Calu3 (cell line): ENCODE measurements at regions of chr2 and their contacts with region 1.

Region 1: GRCh38 chr2:223697892-223698645 is 95.9 kb upstream of the SCG2 start:
- DNase-seq: peak; percentile 50
- H3K4me3 Mint-ChIP-seq: peak overlapping the region; percentile 34
- H3K27ac Mint-ChIP-seq: peak overlapping the region; percentile 97
- H3K4me1 Mint-ChIP-seq: peaks cover 72% of the 10 kb centered on the region
- H3K27me3 Mint-ChIP-seq: no peaks in the 10 kb centered on the region
- CTCF ChIP-seq: peak; percentile 27

Region 2: GRCh38 chr2:223727562-223727961 is 29.5 kb after region 1 on chr2:
- CTCF ChIA-PET with region 1: interaction called, 5 read pairs
- intact Hi-C with region 1: loop called (anchors 2 kb)
- DNase-seq: peak; percentile 51
- H3K4me3 Mint-ChIP-seq: no peak overlapping the region
- H3K27ac Mint-ChIP-seq: peak overlapping the region; percentile 20
- H3K4me1 Mint-ChIP-seq: peaks cover 61% of the 10 kb centered on the region
- H3K27me3 Mint-ChIP-seq: no peaks in the 10 kb centered on the region
- CTCF ChIP-seq: peak; percentile 61

Region 3: DNA sequence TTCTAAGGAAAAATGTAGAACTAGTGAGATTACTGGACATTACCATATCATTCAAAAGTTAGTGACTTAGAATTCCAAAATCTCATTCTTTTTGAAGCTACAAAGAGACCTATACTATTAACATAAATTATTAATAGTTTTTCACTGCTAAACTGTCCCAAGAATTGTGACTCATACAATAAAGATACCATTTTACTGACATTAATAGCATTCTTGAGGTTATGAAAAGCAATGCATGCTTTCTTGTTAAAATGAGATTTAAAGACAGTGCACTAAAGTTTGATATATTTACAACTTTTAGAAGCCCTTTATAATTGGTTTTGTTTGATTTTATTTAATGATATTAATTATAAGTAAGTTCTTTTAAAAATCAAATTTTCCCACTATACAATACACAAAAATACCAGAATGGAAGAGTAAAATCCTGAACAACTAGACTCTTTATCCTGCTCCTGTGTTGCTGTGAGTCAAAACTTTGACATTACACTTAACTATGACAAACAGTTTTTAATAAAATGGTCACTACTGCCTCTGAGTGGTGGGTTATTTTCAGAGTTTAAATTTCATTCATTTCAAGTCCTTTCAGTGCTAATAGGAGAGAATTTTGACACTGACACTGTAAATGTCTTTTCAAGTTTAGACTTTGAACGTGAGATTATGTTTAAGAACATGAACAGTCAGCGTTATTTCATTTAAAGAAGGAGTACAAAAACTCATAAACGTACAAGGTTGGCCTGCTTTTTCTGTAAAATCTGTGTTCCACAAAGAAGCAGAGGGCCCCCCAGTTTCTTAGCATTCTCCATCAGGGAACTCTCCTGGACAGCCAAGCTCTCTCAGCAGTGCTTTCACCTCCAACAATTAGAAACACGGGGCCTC is 649.3 kb after region 1 on chr2:
- CTCF ChIA-PET with region 1: no interaction called
- intact Hi-C with region 1: no loop called
- DNase-seq: no peak
- H3K4me3 Mint-ChIP-seq: no peak overlapping the region
- H3K27ac Mint-ChIP-seq: no peak overlapping the region
- H3K4me1 Mint-ChIP-seq: no peaks in the 10 kb centered on the region
- H3K27me3 Mint-ChIP-seq: peaks cover 9% of the 10 kb centered on the region
- CTCF ChIP-seq: no peak